T-cell (primary cell): ENCODE measurements at regions of chr6 and their contacts with region 1.

Region 1: GRCh38 chr6:31597006-31597405 is 4.2 kb upstream of the NCR3 start:
- DNase-seq: peak in 27 of 35 experiments; percentile 22 to 83 (median 43)
- ATAC-seq: peak; percentile 70 to 81 (median 78)
- H3K4me3 ChIP-seq: no peak overlapping the region
- H3K4me3 Mint-ChIP-seq: peak overlapping the region in 2 of 3 donors; percentile 31 to 65
- H3K27ac ChIP-seq: peak overlapping the region; percentile 9
- H3K27ac Mint-ChIP-seq: peak overlapping the region; percentile 77 to 88
- H3K4me1 ChIP-seq: peaks cover 29 to 64% of the 10 kb centered on the region in 2 experiments
- H3K4me1 Mint-ChIP-seq: peaks cover 52 to 55% (median 53%) of the 10 kb centered on the region in 3 donors
- H3K27me3 ChIP-seq: no peaks in the 10 kb centered on the region
- H3K27me3 Mint-ChIP-seq: no peaks in the 10 kb centered on the region

Region 2: GRCh38 chr6:31546962-31547726 is 49.9 kb before region 1 on chr6 and contains the start of gene NFKBIL1:
- CTCF ChIA-PET with region 1: interaction called, 35 to 244 read pairs
- POLR2A ChIA-PET with region 1: interaction called, 3 to 6 read pairs
- DNase-seq: peak; percentile 69 to 95 (median 86)
- ATAC-seq: peak; percentile 85 to 90 (median 88)
- H3K4me3 ChIP-seq: peak within 1 kb of the TSS; percentile 46 to 49
- H3K4me3 Mint-ChIP-seq: peak within 1 kb of the TSS; percentile 84 to 88 (median 88)
- H3K27ac ChIP-seq: peak within 1 kb of the TSS; percentile 82
- H3K27ac Mint-ChIP-seq: peak within 1 kb of the TSS; percentile 88 to 92
- H3K4me1 ChIP-seq: peaks cover 13 to 44% of the 10 kb centered on the region in 2 experiments
- H3K4me1 Mint-ChIP-seq: peaks cover 39 to 45% (median 41%) of the 10 kb centered on the region in 3 donors
- H3K27me3 ChIP-seq: no peaks in the 10 kb centered on the region
- H3K27me3 Mint-ChIP-seq: no peaks in the 10 kb centered on the region
- total RNA-seq, gene NFKBIL1: 6.9 to 17.1 (median 11.6) TPM

Region 3: GRCh38 chr6:31575335-31575901 is 21.6 kb before region 1 on chr6 and contains the start of gene TNF:
- CTCF ChIA-PET with region 1: interaction called, 41 to 167 read pairs
- POLR2A ChIA-PET with region 1: interaction called, 3 to 6 read pairs
- DNase-seq: peak in 26 of 35 experiments; percentile 32 to 81 (median 52)
- ATAC-seq: peak; percentile 5 to 8 (median 6)
- H3K4me3 ChIP-seq: peak within 1 kb of the TSS; percentile 79 to 87
- H3K4me3 Mint-ChIP-seq: peak within 1 kb of the TSS; percentile 86 to 99 (median 91)
- H3K27ac ChIP-seq: peak within 1 kb of the TSS; percentile 92
- H3K27ac Mint-ChIP-seq: peak within 1 kb of the TSS; percentile 98 to 100
- H3K4me1 ChIP-seq: peaks cover 45 to 93% of the 10 kb centered on the region in 2 experiments
- H3K4me1 Mint-ChIP-seq: peaks cover 90 to 95% (median 94%) of the 10 kb centered on the region in 3 donors
- H3K27me3 ChIP-seq: no peaks in the 10 kb centered on the region
- H3K27me3 Mint-ChIP-seq: no peaks in the 10 kb centered on the region
- total RNA-seq, gene TNF: 13.8 to 28.0 (median 25.0) TPM

Region 4: GRCh38 chr6:31634131-31634530 is 37.1 kb after region 1 on chr6:
- CTCF ChIA-PET with region 1: no interaction called
- POLR2A ChIA-PET with region 1: interaction called in 1 of 2 experiments, 10 read pairs
- DNase-seq: no peak
- ATAC-seq: no peak
- H3K4me3 ChIP-seq: no peak overlapping the region
- H3K4me3 Mint-ChIP-seq: no peak overlapping the region
- H3K27ac ChIP-seq: no peak overlapping the region
- H3K27ac Mint-ChIP-seq: no peak overlapping the region
- H3K4me1 ChIP-seq: no peaks in the 10 kb centered on the region
- H3K4me1 Mint-ChIP-seq: peaks cover 0 to 6% (median 0%) of the 10 kb centered on the region in 3 donors
- H3K27me3 ChIP-seq: no peaks in the 10 kb centered on the region
- H3K27me3 Mint-ChIP-seq: no peaks in the 10 kb centered on the region